ENCODE measurements at regions of chr1 and their contacts with region 1.

Region 1: GRCh38 chr1:221203224-221204054 is 324.2 kb downstream of the HLX start:
- DNase-seq: peak; percentile 61
- CTCF ChIP-seq: peak; percentile 96

Region 2: GRCh38 chr1:220810179-220810653 is 393.2 kb before region 1 on chr1:
- CTCF ChIA-PET with region 1: interaction called, 29 read pairs
- POLR2A ChIA-PET with region 1: no interaction called
- DNase-seq: peak; percentile 79
- CTCF ChIP-seq: peak; percentile 88

Region 3: DNA sequence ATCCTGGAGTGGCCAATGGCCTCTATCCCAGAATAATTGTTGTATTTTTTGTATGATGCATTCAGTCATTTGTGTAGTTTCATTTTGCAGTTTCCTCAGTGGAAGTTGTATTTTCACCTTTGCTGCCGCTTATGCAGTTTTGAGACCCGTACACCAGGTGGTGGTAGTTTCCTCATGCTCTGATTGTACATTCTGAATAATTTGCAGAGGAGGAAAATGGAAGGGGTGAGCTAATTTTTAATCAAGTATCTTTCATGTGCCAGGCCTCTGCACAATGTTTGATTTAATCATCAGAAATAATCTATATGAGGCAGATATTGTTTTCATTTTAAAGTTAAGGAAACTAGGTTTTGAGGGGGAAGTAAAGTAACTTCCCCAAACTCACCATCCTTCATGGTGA is 294.7 kb before region 1 on chr1:
- CTCF ChIA-PET with region 1: interaction called, 60 read pairs
- POLR2A ChIA-PET with region 1: no interaction called
- DNase-seq: peak; percentile 15
- CTCF ChIP-seq: peak; percentile 20

Region 4: DNA sequence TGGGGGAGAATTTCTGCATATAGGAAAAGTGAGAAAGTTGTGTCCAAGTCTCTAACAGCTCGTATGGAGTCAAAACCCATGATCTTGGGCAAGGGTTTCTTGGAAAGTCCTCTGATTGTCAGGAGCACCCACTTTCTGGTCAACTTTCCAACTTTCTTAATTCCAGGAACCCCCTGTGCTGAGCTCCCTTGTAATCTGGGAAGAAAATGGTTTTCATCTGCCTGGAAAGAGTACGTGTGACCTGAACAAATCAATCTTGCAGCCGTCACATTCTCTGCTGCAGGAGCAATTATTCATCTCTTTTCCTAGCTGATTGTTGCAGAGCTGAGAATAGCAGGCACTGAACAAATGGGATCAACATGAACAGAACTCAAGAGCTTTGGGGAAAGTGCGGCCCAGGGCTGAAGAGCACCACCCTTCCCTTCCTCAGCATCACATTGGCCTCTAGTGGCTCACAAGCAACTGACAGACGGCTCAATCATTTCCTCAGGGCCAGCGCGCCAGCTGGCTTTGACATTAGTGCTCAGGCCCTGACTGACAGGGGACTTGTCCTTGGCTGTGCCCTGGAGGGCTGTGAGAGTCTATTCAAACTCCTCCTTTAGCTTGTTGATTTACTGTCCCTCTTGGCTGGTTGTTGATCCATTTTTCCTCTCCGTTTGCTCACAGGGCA is 29.0 kb before region 1 on chr1:
- CTCF ChIA-PET with region 1: interaction called, 10 read pairs
- POLR2A ChIA-PET with region 1: no interaction called
- DNase-seq: no peak
- CTCF ChIP-seq: no peak

Region 5: GRCh38 chr1:221217029-221217428 is 13.6 kb after region 1 on chr1:
- CTCF ChIA-PET with region 1: interaction called, 10 read pairs
- POLR2A ChIA-PET with region 1: no interaction called
- DNase-seq: no peak
- CTCF ChIP-seq: no peak